CD14-positive monocyte (primary cell): ENCODE measurements at regions of chr14 and their contacts with region 1.

Region 1: DNA sequence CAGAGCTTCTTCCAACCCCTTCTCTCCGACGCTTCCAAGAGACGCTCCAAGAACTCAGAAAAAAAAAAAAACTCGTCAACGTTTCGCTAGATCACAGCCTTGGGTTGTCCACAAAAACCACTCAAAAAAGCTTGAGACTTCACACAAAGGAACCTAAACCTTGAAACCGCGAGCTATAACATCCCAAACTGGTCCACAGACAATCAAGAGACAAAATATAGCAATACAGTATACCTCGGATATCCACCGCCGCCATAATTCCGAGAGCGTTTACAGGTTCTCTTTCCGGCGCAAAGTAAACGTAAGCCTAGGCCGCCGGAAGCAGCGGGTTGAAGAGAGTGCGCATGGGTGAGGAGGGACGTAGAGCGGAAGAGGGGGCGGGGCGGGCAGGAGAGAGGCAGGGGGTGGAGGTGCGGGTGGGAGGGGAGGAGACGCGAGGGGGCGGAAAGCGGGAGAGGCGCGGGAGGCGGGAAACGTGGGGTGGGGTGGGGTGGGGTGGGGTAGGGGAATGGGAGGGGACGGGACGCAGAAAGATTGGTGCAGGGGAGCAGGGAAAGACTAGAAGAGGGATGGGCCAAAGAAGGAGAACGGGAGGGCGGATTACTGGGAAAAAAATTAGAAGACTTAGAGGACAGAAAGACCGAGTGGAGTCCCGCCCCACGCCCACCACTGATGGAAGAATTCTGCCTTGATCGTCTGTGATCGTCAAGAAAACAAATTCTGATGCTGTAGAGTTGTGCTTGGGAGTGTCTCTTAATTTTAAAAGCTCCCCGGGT is at the start of gene MED6:
- DNase-seq: peak; percentile 84 to 89 (median 85)
- H3K4me3 ChIP-seq: peak within 1 kb of the TSS; percentile 90 to 98 (median 95)
- H3K4me3 Mint-ChIP-seq: peak within 1 kb of the TSS; percentile 92 to 97
- H3K27ac ChIP-seq: peak within 1 kb of the TSS; percentile 22 to 94
- H3K27ac Mint-ChIP-seq: peak within 1 kb of the TSS; percentile 93 to 99 (median 96)
- H3K4me1 ChIP-seq: peaks cover 15 to 23% of the 10 kb centered on the region in 2 donors
- H3K4me1 Mint-ChIP-seq: peaks cover 20% of the 10 kb centered on the region
- H3K27me3 ChIP-seq: peaks cover 9 to 11% of the 10 kb centered on the region in 2 donors
- H3K27me3 Mint-ChIP-seq: peaks cover 2 to 12% (median 11%) of the 10 kb centered on the region in 3 donors
- CTCF ChIP-seq: no peak
- polyA plus RNA-seq, gene MED6: 11.9 to 22.3 (median 19.4) TPM

Region 2: GRCh38 chr14:69398053-69398817 is 1202.3 kb before region 1 on chr14 and contains the starts of genes ERH and SLC39A9:
- intact Hi-C with region 1: loop called in 1 of 2 experiments (anchors 10 kb)
- DNase-seq: peak; percentile 96 to 98 (median 97)
- H3K4me3 ChIP-seq: peak within 1 kb of the TSS; percentile 66 to 99 (median 99)
- H3K4me3 Mint-ChIP-seq: peak within 1 kb of the TSS; percentile 92 to 96
- H3K27ac ChIP-seq: peak within 1 kb of the TSS; percentile 69 to 99
- H3K27ac Mint-ChIP-seq: peak within 1 kb of the TSS; percentile 97 to 99 (median 99)
- H3K4me1 ChIP-seq: peaks cover 35 to 48% of the 10 kb centered on the region in 2 donors
- H3K4me1 Mint-ChIP-seq: peaks cover 51% of the 10 kb centered on the region
- H3K27me3 ChIP-seq: no peaks in the 10 kb centered on the region
- H3K27me3 Mint-ChIP-seq: no peaks in the 10 kb centered on the region
- CTCF ChIP-seq: no peak
- polyA plus RNA-seq, gene ERH: 63.6 to 67.0 (median 64.3) TPM
- polyA plus RNA-seq, gene SLC39A9: 28.6 to 44.2 (median 37.6) TPM

Region 3: DNA sequence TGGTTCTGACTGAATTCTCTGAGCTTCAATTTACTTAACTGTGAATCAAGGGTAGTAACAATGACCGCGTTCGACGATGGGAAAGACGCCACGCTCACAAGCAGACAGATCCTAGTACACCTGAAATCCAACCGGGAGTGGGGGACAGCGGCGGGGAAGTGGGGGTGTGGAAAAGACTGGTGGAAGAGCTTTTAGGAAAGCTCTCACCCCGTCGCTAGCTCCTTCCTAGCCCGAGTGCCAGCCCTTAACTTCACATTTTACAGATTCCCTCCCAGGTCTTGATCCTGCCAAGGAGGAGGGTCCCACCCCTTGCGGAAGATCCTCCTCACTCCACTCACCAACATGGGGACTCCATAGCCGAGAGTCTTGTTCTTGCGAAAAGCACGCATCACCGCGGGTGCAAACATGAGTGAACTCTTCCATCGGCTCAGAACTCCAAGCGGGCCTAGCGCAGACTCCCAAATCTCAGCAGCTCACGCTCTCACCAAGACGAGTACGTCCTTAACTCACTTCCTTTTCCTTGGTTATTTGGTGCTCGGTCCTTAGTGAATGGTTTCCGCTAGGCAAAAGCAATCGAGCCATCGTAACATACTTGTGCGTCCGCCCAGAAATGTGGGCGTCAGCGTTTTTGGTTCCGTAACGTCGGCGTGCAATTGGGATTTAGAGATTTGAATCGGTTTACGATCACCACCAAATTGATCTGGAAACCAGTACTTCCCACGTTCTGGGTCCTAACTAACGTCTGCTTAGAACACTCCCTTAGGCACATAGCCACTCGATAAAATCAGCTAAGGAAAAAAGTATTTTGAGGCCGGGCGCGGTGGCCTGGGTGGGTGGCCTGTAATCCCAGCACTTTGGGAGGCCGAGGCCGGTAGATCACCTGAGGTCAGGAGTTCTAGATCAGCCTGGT is 241.1 kb before region 1 on chr14 and contains the start of gene COX16:
- intact Hi-C with region 1: loop called in 1 of 2 experiments (anchors 10 kb)
- DNase-seq: peak; percentile 84 to 89 (median 86)
- H3K4me3 ChIP-seq: peak within 1 kb of the TSS; percentile 92 to 97 (median 95)
- H3K4me3 Mint-ChIP-seq: peak within 1 kb of the TSS; percentile 99 to 100
- H3K27ac ChIP-seq: peak within 1 kb of the TSS; percentile 72 to 88
- H3K27ac Mint-ChIP-seq: peak within 1 kb of the TSS; percentile 91 to 96 (median 95)
- H3K4me1 ChIP-seq: peaks cover 13 to 18% of the 10 kb centered on the region in 2 donors
- H3K4me1 Mint-ChIP-seq: peaks cover 20% of the 10 kb centered on the region
- H3K27me3 ChIP-seq: peaks cover 13 to 24% of the 10 kb centered on the region in 2 donors
- H3K27me3 Mint-ChIP-seq: peaks cover 11 to 16% (median 15%) of the 10 kb centered on the region in 3 donors
- CTCF ChIP-seq: no peak
- polyA plus RNA-seq, gene COX16: 10.6 to 48.0 (median 47.7) TPM